Activated CD4-positive, alpha-beta T cell treated with anti-CD3 and anti-CD28 coated beads for 36 hours (primary cell): ENCODE measurements at regions of chr13 and their contacts with region 1.

Region 1: GRCh38 chr13:26929971-26930730 is 169.6 kb upstream of the GPR12 start:
- DNase-seq: peak; percentile 85
- ATAC-seq: peak; percentile 72
- H3K4me3 Mint-ChIP-seq: no peak overlapping the region
- H3K27ac Mint-ChIP-seq: no peak overlapping the region
- H3K4me1 Mint-ChIP-seq: no peaks in the 10 kb centered on the region
- H3K27me3 Mint-ChIP-seq: peaks cover 3% of the 10 kb centered on the region

Region 2: GRCh38 chr13:26482451-26483197 is 447.5 kb before region 1 on chr13:
- CTCF ChIA-PET with region 1: no interaction called
- POLR2A ChIA-PET with region 1: no interaction called
- intact Hi-C with region 1: loop called in 1 of 2 experiments (anchors 10 kb)
- DNase-seq: peak; percentile 78
- ATAC-seq: peak; percentile 83
- H3K4me3 Mint-ChIP-seq: no peak overlapping the region
- H3K27ac Mint-ChIP-seq: no peak overlapping the region
- H3K4me1 Mint-ChIP-seq: peaks cover 14% of the 10 kb centered on the region
- H3K27me3 Mint-ChIP-seq: no peaks in the 10 kb centered on the region

Region 3: DNA sequence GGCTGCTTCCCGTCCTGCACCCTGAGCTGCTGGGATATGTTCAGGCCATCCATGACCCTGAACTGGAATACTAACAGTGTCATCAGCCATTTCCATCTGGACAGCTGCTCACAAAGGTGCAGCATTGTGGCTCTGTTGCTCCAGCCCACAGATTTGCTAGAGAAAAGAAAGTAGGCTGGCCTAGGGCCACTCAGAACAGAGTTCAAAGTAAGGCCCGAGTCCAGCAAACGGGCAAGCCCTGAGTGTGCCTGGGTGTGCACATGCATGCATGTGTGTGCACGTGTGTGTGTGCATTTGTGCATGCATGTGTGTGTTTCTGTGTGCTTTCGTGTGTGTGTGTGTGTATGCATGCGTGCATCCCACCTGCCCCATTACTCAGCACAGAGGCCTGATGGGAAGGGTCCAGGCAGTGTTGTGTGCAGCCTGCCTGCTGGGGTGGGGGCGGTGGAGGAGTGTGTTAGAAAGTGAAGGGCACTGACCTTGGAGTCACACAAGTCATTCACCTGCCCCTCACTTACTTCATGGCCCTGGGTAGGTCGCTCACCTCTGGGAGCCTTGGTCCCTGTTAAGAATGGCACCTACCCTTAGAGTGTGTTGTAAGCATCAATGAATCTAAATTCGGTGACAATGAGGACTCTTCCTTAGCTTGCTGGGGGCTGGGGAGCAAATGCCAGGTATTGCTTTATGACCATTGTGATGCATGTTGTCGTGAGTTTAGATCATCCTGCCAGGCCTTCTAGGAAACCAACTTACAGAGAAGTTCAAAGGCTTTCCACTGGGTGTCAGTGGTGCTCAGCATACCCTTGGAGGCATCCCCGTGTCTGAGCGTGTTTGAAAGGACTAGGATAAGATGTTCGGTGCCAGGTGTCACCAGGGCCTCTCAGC is 222.8 kb before region 1 on chr13:
- CTCF ChIA-PET with region 1: interaction called, 4 read pairs
- POLR2A ChIA-PET with region 1: no interaction called
- intact Hi-C with region 1: loop called (anchors 1 to 5 kb)
- DNase-seq: peak; percentile 63
- ATAC-seq: peak; percentile 85
- H3K4me3 Mint-ChIP-seq: no peak overlapping the region
- H3K27ac Mint-ChIP-seq: no peak overlapping the region
- H3K4me1 Mint-ChIP-seq: no peaks in the 10 kb centered on the region
- H3K27me3 Mint-ChIP-seq: no peaks in the 10 kb centered on the region

Region 4: GRCh38 chr13:26872525-26873385 is 57.4 kb before region 1 on chr13:
- CTCF ChIA-PET with region 1: interaction called, 7 read pairs
- POLR2A ChIA-PET with region 1: no interaction called
- intact Hi-C with region 1: loop called in 1 of 2 experiments (anchors 2 kb)
- DNase-seq: peak; percentile 82
- ATAC-seq: no peak
- H3K4me3 Mint-ChIP-seq: no peak overlapping the region
- H3K27ac Mint-ChIP-seq: no peak overlapping the region
- H3K4me1 Mint-ChIP-seq: peaks cover 2% of the 10 kb centered on the region
- H3K27me3 Mint-ChIP-seq: peaks cover 9% of the 10 kb centered on the region

Region 5: GRCh38 chr13:26914624-26915023 is 15.5 kb before region 1 on chr13:
- CTCF ChIA-PET with region 1: interaction called, 11 read pairs
- POLR2A ChIA-PET with region 1: no interaction called
- intact Hi-C with region 1: no loop called
- DNase-seq: peak; percentile 23
- ATAC-seq: peak; percentile 23
- H3K4me3 Mint-ChIP-seq: no peak overlapping the region
- H3K27ac Mint-ChIP-seq: no peak overlapping the region
- H3K4me1 Mint-ChIP-seq: peaks cover 7% of the 10 kb centered on the region
- H3K27me3 Mint-ChIP-seq: peaks cover 7% of the 10 kb centered on the region

Region 6: GRCh38 chr13:26941345-26942174 is 11.4 kb after region 1 on chr13:
- CTCF ChIA-PET with region 1: interaction called, 12 read pairs
- POLR2A ChIA-PET with region 1: no interaction called
- intact Hi-C with region 1: no loop called
- DNase-seq: peak; percentile 32
- ATAC-seq: peak; percentile 100
- H3K4me3 Mint-ChIP-seq: no peak overlapping the region
- H3K27ac Mint-ChIP-seq: no peak overlapping the region
- H3K4me1 Mint-ChIP-seq: peaks cover 4% of the 10 kb centered on the region
- H3K27me3 Mint-ChIP-seq: peaks cover 4% of the 10 kb centered on the region

Region 7: GRCh38 chr13:27053902-27054595 is 123.9 kb after region 1 on chr13:
- CTCF ChIA-PET with region 1: no interaction called
- POLR2A ChIA-PET with region 1: no interaction called
- intact Hi-C with region 1: no loop called
- DNase-seq: no peak
- ATAC-seq: no peak
- H3K4me3 Mint-ChIP-seq: no peak overlapping the region
- H3K27ac Mint-ChIP-seq: no peak overlapping the region
- H3K4me1 Mint-ChIP-seq: peaks cover 8% of the 10 kb centered on the region
- H3K27me3 Mint-ChIP-seq: no peaks in the 10 kb centered on the region